Cardiac septum (tissue), 1 donor: ENCODE measurements at regions of chr7 and their contacts with region 1.

Region 1: DNA sequence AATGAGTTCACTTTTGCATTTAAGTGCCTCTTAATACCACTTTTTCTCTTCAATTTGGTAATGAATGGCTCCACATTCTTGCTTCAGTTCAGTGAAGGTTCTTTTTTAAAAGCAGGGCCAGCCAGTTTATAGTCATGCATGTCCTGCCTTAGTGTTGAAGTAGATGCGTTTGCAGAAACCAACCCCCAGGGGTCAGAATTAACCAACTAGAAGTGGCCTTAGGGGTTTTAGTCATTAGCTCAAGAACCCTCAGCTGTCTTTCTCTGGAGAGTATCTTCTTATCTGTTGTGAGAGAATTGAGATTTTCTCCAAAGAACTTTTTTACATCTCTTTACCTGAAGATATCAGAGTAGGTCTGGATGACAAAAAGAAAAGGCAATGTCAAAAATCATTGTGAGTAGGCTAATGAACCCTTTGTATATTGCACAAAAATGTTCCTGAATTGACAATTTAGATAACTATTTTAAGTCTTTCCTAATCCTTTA is 82.2 kb downstream of the PIK3CG start:
- DNase-seq: no peak

Region 2: GRCh38 chr7:106840342-106840741 is 106.9 kb before region 1 on chr7:
- intact Hi-C with region 1: no loop called
- DNase-seq: no peak

Region 3: GRCh38 chr7:107090457-107090856 is 143.2 kb after region 1 on chr7:
- intact Hi-C with region 1: no loop called
- DNase-seq: no peak

Region 4: GRCh38 chr7:107150375-107151073 is 203.2 kb after region 1 on chr7:
- intact Hi-C with region 1: loop called (anchors 2 kb)
- DNase-seq: no peak